ENCODE measurements at regions of chr3 and their contacts with region 1.

Region 1: DNA sequence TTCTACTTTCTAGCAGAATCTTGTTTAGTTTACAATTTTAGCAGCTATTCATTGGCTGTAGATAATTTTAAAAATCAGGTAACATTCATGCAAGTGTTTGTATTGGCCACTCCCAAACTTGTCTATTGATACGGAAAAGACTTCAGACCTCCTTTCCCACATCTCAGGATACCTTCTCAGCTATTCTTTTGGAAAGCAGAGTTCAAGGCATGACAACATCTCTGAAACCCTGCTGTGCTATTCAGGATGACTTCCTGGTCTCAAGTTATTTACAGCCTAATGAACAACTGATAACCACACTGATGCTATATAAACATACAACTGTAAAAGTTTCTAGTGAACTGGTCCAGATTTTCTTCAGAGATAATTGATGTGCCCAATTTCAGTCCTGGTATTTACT is 55.8 kb downstream of the DZIP3 start:
- DNase-seq: no peak
- H3K4me3 ChIP-seq: no peak overlapping the region
- H3K4me3 Mint-ChIP-seq: no peak overlapping the region
- H3K27ac ChIP-seq: no peak overlapping the region
- H3K27ac Mint-ChIP-seq: no peak overlapping the region
- H3K4me1 ChIP-seq: no peaks in the 10 kb centered on the region
- H3K4me1 Mint-ChIP-seq: no peaks in the 10 kb centered on the region
- H3K27me3 ChIP-seq: no peaks in the 10 kb centered on the region
- H3K27me3 Mint-ChIP-seq: no peaks in the 10 kb centered on the region

Region 2: DNA sequence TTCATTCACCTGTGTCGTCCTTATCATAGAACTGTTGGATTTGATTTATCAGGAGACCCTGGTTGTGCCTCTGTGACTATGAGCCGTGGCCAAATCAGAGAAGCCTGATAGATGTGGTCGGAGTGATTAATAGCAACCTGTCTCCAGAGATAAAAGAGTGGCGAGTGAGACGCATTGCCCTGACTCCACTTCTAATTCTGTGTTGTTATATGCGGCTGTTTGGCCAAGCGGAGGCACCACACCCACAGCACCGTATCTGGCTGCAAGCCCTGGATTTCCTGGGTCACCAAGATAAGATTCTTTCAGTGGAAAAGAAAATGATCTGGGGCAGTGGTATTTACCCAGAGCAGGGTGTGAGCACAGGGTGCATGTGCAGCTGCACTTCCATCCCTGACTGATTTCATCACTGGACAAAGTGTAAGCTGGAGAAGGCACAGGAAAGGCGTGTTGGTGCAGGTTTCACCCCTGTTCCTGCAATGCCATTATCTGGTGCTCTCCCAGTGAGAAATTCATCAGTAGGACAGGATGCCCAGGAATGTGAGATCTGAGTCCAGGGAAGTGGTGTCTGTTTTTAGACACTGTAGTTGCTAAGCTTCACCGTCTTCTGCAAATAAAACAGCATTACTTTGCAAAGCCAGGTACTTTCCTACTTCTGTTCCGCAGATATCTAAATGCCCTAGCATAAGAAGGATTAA is 639.1 kb before region 1 on chr3:
- CTCF ChIA-PET with region 1: no interaction called
- POLR2A ChIA-PET with region 1: no interaction called
- intact Hi-C with region 1: no loop called
- DNase-seq: no peak
- H3K4me3 ChIP-seq: no peak overlapping the region
- H3K4me3 Mint-ChIP-seq: no peak overlapping the region
- H3K27ac ChIP-seq: no peak overlapping the region
- H3K27ac Mint-ChIP-seq: peak overlapping the region in 1 of 7 donors; percentile 22
- H3K4me1 ChIP-seq: no peaks in the 10 kb centered on the region
- H3K4me1 Mint-ChIP-seq: peaks cover 4 to 13% (median 9%) of the 10 kb centered on the region in 4 donors
- H3K27me3 ChIP-seq: no peaks in the 10 kb centered on the region
- H3K27me3 Mint-ChIP-seq: peaks cover 0 to 2% of the 10 kb centered on the region in 2 donors

Region 3: DNA sequence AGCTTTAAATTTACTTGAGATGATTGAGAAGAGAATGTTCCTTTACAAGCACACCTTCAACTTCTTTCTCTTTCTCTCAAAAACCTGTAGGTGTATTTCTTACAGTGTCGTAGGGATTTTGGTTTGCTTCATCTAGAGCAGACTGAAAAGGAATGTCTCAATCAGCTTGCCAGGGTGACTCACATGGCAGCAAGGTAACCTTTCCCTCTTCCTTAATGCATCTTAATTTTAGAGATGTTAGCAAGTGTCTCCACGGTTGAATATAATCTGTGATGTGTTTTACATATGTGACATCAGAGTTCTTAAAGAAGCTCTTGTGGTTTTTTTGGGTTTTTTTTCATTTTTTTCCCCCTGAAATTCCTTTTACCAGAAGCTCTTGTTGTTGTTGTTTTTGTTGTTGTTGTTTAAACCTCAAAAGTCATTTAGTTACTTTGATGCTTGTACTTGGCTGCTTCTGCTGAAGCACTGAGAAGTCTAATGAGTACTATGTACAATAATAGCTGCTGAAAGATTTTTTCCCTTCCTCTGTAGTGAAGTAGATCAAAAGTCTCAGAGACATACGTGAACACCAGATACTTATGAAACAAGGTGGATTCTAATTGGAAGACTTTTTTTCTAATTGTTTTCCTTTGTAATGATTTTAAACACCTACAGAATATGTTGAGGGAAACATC is 28.8 kb after region 1 on chr3:
- CTCF ChIA-PET with region 1: no interaction called
- POLR2A ChIA-PET with region 1: no interaction called
- intact Hi-C with region 1: loop called (anchors 1 kb)
- DNase-seq: no peak
- H3K4me3 ChIP-seq: no peak overlapping the region
- H3K4me3 Mint-ChIP-seq: no peak overlapping the region
- H3K27ac ChIP-seq: no peak overlapping the region
- H3K27ac Mint-ChIP-seq: no peak overlapping the region
- H3K4me1 ChIP-seq: no peaks in the 10 kb centered on the region
- H3K4me1 Mint-ChIP-seq: no peaks in the 10 kb centered on the region
- H3K27me3 ChIP-seq: no peaks in the 10 kb centered on the region
- H3K27me3 Mint-ChIP-seq: no peaks in the 10 kb centered on the region

Region 4: DNA sequence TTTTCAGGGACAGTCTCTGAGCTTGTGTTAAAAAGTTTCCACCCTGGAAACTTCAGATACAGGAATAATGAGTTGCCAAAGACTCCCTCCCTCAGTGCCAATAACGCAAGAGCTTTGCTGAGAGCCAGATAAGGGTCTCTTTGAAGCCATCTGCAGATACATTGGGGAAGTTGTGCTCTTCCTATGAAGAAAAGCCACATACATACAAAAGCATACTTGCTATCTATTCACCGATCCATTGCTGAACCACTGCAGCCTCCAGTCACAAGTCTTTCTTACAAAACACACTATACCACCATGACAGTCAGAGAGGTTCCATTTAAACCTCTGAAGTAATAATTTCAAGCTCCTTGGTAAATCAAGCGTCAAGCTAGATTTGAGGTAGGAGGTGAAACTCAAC is 121.9 kb after region 1 on chr3:
- CTCF ChIA-PET with region 1: no interaction called
- POLR2A ChIA-PET with region 1: no interaction called
- intact Hi-C with region 1: no loop called
- DNase-seq: no peak
- H3K4me3 ChIP-seq: no peak overlapping the region
- H3K4me3 Mint-ChIP-seq: no peak overlapping the region
- H3K27ac ChIP-seq: no peak overlapping the region
- H3K27ac Mint-ChIP-seq: no peak overlapping the region
- H3K4me1 ChIP-seq: no peaks in the 10 kb centered on the region
- H3K4me1 Mint-ChIP-seq: no peaks in the 10 kb centered on the region
- H3K27me3 ChIP-seq: no peaks in the 10 kb centered on the region
- H3K27me3 Mint-ChIP-seq: peaks cover 0 to 2% of the 10 kb centered on the region in 2 donors

Measured in CD4-positive, alpha-beta memory T cell (primary cell).